Ascending aorta (tissue), 2 donors: ENCODE measurements at regions of chr9 and their contacts with region 1.

Region 1: GRCh38 chr9:99140685-99141314 is 35.9 kb downstream of the TGFBR1 start:
- DNase-seq: peak in 1 of 2 donors; percentile 60
- H3K4me3 ChIP-seq: no peak overlapping the region
- H3K27ac ChIP-seq: no peak overlapping the region
- H3K4me1 ChIP-seq: no peaks in the 10 kb centered on the region
- H3K27me3 ChIP-seq: no peaks in the 10 kb centered on the region
- CTCF ChIP-seq: peak; percentile 71 to 78 (median 72)

Region 2: GRCh38 chr9:98848450-98849149 is 292.2 kb before region 1 on chr9:
- intact Hi-C with region 1: loop called (anchors 5 kb)
- DNase-seq: peak; percentile 26 to 92
- H3K4me3 ChIP-seq: peak overlapping the region; percentile 35 to 55
- H3K27ac ChIP-seq: no peak overlapping the region
- H3K4me1 ChIP-seq: no peaks in the 10 kb centered on the region
- H3K27me3 ChIP-seq: no peaks in the 10 kb centered on the region
- CTCF ChIP-seq: peak; percentile 78 to 90 (median 83)

Region 3: GRCh38 chr9:98974994-98975712 is 165.6 kb before region 1 on chr9:
- intact Hi-C with region 1: loop called (anchors 2 kb)
- DNase-seq: peak in 1 of 2 donors; percentile 92
- H3K4me3 ChIP-seq: peak overlapping the region; percentile 39 to 56
- H3K27ac ChIP-seq: peak overlapping the region; percentile 40 to 47
- H3K4me1 ChIP-seq: peaks cover 0 to 29% of the 10 kb centered on the region in 2 donors
- H3K27me3 ChIP-seq: no peaks in the 10 kb centered on the region
- CTCF ChIP-seq: peak; percentile 94 to 100 (median 99)